Lower leg skin (tissue), 4 donors: ENCODE measurements at regions of chr5 and their contacts with region 1.

Region 1: DNA sequence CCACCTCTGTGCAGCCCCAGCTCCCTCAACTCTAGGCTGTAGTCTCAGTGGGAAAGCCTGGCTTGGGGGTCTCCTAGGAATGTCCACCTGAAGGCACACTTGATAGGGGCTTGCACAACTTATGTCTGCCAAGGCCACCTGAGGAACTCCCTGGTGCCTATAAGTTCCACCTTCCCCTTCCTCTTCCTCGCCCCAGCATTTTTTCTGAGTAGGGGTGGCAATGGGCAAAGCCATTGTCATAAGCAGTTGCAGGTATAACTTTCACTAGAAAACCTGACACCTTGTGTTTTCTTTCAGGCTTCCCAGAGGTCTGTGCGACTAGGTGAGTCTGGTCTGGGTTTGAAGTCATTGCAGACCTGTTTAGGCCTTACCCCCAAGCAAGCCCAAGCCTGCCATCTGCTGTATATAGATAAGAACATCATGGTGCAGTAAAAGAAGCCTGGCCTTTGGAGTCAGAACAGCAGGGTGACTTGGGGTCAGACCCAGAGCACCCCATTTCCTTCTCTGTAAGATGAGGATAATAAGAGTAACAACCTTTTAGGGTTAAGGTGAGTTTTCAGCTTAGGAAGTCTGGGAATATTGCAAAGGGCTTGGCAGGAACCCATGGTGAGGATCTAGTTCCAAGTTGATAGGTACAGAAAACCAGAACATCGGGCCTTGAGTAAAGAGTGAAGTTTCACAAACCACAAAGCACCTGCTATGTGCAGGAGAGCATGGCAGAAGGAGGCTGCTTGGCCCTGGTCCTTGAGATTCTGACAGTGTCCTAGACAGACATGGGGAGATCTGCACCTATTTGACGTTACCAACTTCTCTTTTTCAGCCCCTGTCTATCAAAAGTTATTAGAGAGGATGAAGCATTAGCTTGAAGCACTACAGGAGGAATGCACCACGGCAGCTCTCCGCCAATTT is 33.8 kb downstream of the TGFBI start:
- DNase-seq: peak in 1 of 2 donors; percentile 72
- H3K4me3 ChIP-seq: no peak overlapping the region
- CTCF ChIP-seq: no peak
- POLR2A ChIP-seq: no peak

Region 2: DNA sequence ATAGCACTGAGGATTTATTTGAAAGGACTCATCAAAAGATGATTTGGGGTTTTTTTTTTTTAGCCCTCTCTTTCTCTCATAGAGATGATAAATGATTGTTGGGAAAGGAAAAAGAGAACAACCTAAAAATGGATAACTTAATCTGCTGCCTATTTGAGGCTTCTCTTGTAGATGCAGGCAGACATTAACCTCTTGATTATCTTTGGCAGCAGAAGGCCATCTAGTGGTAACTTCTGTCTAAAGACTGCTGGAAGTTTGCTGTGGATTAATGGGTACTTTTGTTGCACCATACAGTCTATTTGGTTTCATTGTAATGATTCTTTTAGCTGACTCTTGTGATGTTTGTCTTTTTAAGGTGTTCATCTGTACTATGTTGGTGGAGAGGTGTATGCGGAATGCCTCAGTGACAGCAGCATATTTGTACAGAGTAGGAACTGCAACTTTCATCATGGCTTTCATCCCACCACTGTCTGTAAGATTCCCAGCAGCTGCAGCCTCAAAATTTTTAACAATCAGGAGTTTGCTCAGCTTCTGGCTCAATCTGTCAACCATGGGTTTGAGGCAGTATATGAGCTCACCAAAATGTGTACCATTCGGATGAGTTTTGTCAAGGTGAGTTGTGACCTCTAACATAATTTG is 111.5 kb after region 1 on chr5:
- intact Hi-C with region 1: loop called (anchors 10 kb)
- DNase-seq: no peak
- H3K4me3 ChIP-seq: no peak overlapping the region
- CTCF ChIP-seq: no peak
- POLR2A ChIP-seq: no peak